Spleen (tissue), 13 donors: ENCODE measurements at regions of chr5 and their contacts with region 1.

Region 1: DNA sequence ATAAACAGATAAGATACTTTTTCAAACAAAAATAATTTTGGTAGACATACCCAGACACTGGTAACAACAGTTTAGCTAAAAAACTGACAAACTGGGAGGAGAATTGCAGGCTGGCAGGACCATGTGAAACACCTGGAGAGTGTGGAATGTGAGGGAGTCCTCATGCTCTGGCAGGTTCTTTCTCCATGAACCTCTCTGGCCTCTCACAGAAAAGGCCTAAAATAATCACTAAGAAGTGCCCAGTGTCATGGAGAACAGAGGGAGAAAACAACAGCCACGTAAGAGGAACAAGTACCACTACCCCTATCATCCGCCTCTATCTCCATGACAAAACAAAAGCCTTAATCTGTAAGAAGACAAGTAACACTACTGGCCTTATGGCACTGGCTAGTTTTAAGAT is 1227.5 kb upstream of the CDH9 start:
- DNase-seq: no peak
- H3K4me3 ChIP-seq: no peak overlapping the region
- H3K27ac ChIP-seq: no peak overlapping the region
- H3K4me1 ChIP-seq: no peaks in the 10 kb centered on the region
- H3K27me3 ChIP-seq: no peaks in the 10 kb centered on the region
- CTCF ChIP-seq: no peak
- POLR2A ChIP-seq: no peak

Region 2: DNA sequence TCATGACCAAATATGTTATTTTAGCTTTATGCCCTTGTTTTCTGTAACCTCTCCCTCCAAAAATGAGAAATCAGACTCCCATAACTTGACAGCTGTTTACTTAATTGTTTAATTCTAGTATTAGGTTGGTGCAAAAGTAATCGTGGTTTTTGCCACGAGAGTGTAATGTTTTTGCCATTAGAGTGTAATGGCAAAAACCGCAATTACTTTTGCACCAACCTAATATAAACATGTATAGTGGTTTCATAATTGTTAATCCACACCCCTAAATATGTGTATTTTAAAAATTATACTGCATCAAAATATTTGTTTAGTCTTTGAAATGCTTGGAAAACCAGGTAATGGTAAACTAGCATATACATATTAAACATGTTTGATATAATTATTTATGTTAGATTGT is 279.8 kb before region 1 on chr5:
- intact Hi-C with region 1: no loop called
- DNase-seq: no peak
- H3K4me3 ChIP-seq: no peak overlapping the region
- H3K27ac ChIP-seq: no peak overlapping the region
- H3K4me1 ChIP-seq: no peaks in the 10 kb centered on the region
- H3K27me3 ChIP-seq: no peaks in the 10 kb centered on the region
- CTCF ChIP-seq: no peak
- POLR2A ChIP-seq: no peak

Region 3: DNA sequence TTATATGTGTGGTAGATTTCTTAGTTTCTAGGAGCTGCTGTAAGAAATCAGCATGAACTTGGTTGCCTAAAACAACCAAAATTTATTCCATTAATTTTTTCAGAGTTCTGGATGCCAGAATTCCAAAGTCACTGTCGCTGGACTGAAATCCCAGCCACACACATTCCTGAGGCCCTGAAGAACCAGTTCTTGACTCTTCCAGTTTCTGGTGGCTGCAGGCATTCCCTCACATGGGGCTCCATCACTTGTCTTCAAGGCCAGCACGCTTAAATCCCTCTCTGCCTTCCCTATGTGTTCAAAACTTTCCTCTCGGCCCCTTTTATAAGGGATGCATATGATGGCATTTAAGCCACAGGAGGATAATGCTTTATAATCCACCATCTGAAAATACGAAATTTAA is 10.1 kb after region 1 on chr5:
- intact Hi-C with region 1: loop called (anchors 1 kb)
- DNase-seq: no peak
- H3K4me3 ChIP-seq: no peak overlapping the region
- H3K27ac ChIP-seq: no peak overlapping the region
- H3K4me1 ChIP-seq: no peaks in the 10 kb centered on the region
- H3K27me3 ChIP-seq: no peaks in the 10 kb centered on the region
- CTCF ChIP-seq: no peak
- POLR2A ChIP-seq: no peak